Calu3 (cell line): ENCODE measurements at regions of chr5 and their contacts with region 1.

Region 1: DNA sequence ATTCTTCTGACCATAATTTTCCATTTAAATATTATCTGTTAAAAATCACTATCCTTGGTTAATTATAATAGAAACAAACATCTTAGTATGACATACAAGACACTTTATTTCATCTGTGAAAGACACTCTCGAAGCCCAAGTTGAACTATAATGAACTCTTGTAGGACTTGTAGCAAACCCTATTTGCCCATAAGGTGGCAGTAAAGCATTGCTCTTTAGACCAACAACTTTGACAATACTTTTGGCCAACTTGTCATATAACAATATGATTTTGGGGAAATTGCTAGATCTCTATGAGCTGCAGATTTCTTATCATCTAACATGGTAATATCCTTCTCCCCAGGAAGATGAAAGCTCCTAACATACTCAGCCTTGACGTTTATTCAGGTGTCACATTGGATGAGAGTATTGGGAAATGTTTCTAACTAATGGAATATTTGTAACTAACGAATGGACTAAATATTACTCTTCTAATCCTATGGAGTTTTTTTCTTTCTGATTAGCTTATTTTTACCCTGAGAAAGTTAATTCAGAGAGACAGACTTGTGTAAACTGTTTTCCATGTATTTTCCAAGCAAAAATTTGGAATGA is 11.0 kb downstream of the SPINK14 start:
- DNase-seq: peak; percentile 18
- H3K4me3 Mint-ChIP-seq: no peak overlapping the region
- H3K27ac Mint-ChIP-seq: no peak overlapping the region
- H3K4me1 Mint-ChIP-seq: no peaks in the 10 kb centered on the region
- H3K27me3 Mint-ChIP-seq: no peaks in the 10 kb centered on the region
- CTCF ChIP-seq: peak; percentile 18

Region 2: DNA sequence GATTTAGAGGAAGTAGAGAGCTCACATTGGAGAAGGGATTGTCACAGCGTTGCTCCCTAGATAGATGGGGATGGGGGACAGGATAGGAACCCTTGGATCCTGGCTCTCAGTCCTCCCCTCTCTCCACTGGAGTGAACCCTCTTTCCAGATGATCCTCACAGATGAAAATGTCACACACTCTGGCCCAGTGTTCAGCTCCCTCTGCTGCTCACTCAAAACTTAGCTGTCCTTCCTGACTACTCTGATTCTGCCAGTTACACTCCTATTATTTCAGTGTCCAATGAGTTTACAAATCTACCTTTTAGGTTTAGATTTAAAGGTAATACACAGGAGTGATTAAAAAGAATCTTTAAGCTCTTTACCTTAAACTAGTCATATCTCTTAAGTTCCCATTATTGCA is 127.1 kb after region 1 on chr5:
- CTCF ChIA-PET with region 1: no interaction called
- intact Hi-C with region 1: loop called (anchors 2 kb)
- DNase-seq: no peak
- H3K4me3 Mint-ChIP-seq: no peak overlapping the region
- H3K27ac Mint-ChIP-seq: no peak overlapping the region
- H3K4me1 Mint-ChIP-seq: no peaks in the 10 kb centered on the region
- H3K27me3 Mint-ChIP-seq: no peaks in the 10 kb centered on the region
- CTCF ChIP-seq: no peak

Region 3: DNA sequence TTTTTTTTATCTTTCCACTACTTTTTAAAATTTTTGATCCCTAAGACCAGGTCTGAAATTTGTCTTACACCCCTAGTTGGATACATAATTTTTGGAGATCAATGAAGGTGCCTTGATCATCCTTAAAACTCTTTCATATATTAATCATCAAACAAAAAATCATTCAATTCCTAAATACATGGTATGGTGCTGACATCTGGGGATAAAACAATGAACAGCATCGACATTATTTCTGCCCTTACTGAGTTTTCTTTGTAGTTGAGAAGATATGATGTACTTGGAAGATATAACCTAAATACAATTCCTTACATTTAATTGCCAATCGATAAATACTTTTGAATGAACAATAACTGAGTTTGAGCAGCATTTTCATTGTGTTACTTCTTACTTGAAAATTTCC is 174.3 kb after region 1 on chr5:
- CTCF ChIA-PET with region 1: no interaction called
- intact Hi-C with region 1: loop called (anchors 1 kb)
- DNase-seq: no peak
- H3K4me3 Mint-ChIP-seq: no peak overlapping the region
- H3K27ac Mint-ChIP-seq: no peak overlapping the region
- H3K4me1 Mint-ChIP-seq: no peaks in the 10 kb centered on the region
- H3K27me3 Mint-ChIP-seq: no peaks in the 10 kb centered on the region
- CTCF ChIP-seq: no peak

Region 4: GRCh38 chr5:148374692-148375360 is 195.5 kb after region 1 on chr5:
- CTCF ChIA-PET with region 1: no interaction called
- intact Hi-C with region 1: loop called (anchors 1 kb)
- DNase-seq: peak; percentile 64
- H3K4me3 Mint-ChIP-seq: no peak overlapping the region
- H3K27ac Mint-ChIP-seq: no peak overlapping the region
- H3K4me1 Mint-ChIP-seq: peaks cover 18% of the 10 kb centered on the region
- H3K27me3 Mint-ChIP-seq: no peaks in the 10 kb centered on the region
- CTCF ChIP-seq: peak; percentile 71

Region 5: GRCh38 chr5:148457183-148457620 is 277.9 kb after region 1 on chr5:
- CTCF ChIA-PET with region 1: no interaction called
- intact Hi-C with region 1: loop called (anchors 1 kb)
- DNase-seq: peak; percentile 58
- H3K4me3 Mint-ChIP-seq: no peak overlapping the region
- H3K27ac Mint-ChIP-seq: no peak overlapping the region
- H3K4me1 Mint-ChIP-seq: no peaks in the 10 kb centered on the region
- H3K27me3 Mint-ChIP-seq: peaks cover 66% of the 10 kb centered on the region
- CTCF ChIP-seq: peak; percentile 66